ENCODE measurements at regions of chr10 and their contacts with region 1.

Region 1: GRCh38 chr10:43436400-43437140 is at the start of gene ZNF487:
- DNase-seq: peak; percentile 92
- ATAC-seq: peak; percentile 97
- H3K4me3 Mint-ChIP-seq: peak within 1 kb of the TSS; percentile 98
- H3K27ac Mint-ChIP-seq: peak within 1 kb of the TSS; percentile 95
- H3K4me1 Mint-ChIP-seq: peaks cover 17% of the 10 kb centered on the region
- H3K27me3 Mint-ChIP-seq: no peaks in the 10 kb centered on the region
- total RNA-seq, gene ZNF487: 1.8 to 2.3 TPM

Region 2: DNA sequence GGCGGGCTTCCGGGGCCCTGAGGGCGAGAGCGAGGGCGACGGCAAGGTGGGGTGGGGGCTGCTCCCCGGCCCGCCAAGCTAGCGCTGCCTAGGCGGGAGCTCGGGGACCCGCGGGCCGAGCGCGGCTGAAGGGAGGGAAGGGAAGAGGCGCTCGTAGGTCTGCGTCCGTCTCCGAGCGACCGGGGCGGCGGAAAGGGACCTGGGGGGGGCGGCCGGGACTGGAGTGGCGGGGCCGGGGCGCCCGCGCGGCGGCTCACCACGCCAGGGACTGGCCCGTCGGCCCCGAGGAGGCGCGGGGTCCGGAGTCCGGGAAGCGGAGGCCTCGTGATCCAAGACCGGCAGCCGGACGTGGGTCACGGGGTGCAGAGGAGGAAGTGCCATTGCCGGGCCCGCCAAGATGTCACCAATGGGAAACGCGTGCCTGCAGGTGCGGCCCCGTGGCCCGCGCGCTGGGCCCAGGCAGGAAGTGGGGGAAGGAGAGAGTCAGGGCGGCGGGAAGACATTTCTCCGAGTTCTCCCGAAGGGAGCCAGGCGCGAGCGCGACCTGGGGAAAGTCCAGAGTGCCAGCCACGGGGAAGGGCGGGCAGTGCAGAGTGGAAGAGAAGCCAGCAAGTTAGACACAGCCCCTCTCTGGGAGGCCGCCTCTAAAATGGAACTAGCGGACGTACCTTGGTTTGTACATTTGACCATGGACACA is 39.5 kb before region 1 on chr10:
- CTCF ChIA-PET with region 1: no interaction called
- POLR2A ChIA-PET with region 1: interaction called, 3 read pairs
- intact Hi-C with region 1: loop called (anchors 1 kb)
- DNase-seq: peak; percentile 93
- ATAC-seq: peak; percentile 72
- H3K4me3 Mint-ChIP-seq: peak overlapping the region; percentile 99
- H3K27ac Mint-ChIP-seq: peak overlapping the region; percentile 96
- H3K4me1 Mint-ChIP-seq: peaks cover 63% of the 10 kb centered on the region
- H3K27me3 Mint-ChIP-seq: no peaks in the 10 kb centered on the region